Mammary epithelial cell (primary cell): ENCODE measurements at regions of chr22 and their contacts with region 1.

Region 1: GRCh38 chr22:24977370-24978221 is 25.1 kb downstream of the KIAA1671 start:
- DNase-seq: no peak
- H3K4me3 ChIP-seq: no peak overlapping the region
- H3K27ac ChIP-seq: peak overlapping the region; percentile 89
- H3K4me1 ChIP-seq: peaks cover 38% of the 10 kb centered on the region
- H3K27me3 ChIP-seq: no peaks in the 10 kb centered on the region
- CTCF ChIP-seq: no peak

Region 2: GRCh38 chr22:24965822-24966626 is 11.6 kb before region 1 on chr22:
- CTCF ChIA-PET with region 1: no interaction called
- dilution Hi-C with region 1: no loop called
- in situ Hi-C with region 1: no loop called
- intact Hi-C with region 1: loop called (anchors 1 kb)
- DNase-seq: peak; percentile 92
- H3K4me3 ChIP-seq: peak overlapping the region in 1 of 3 experiments; percentile 6
- H3K27ac ChIP-seq: peak overlapping the region; percentile 54
- H3K4me1 ChIP-seq: peaks cover 59% of the 10 kb centered on the region
- H3K27me3 ChIP-seq: no peaks in the 10 kb centered on the region
- CTCF ChIP-seq: no peak